ENCODE measurements at regions of chr6 and their contacts with region 1.

Region 1: GRCh38 chr6:33620856-33621710 is at the start of gene ITPR3:
- DNase-seq: peak; percentile 61 to 93 (median 74)
- ATAC-seq: peak; percentile 88
- H3K4me3 ChIP-seq: peak within 1 kb of the TSS; percentile 99
- H3K4me3 Mint-ChIP-seq: peak within 1 kb of the TSS; percentile 95
- H3K27ac ChIP-seq: peak within 1 kb of the TSS; percentile 76 to 82
- H3K27ac Mint-ChIP-seq: peak within 1 kb of the TSS; percentile 93
- H3K4me1 ChIP-seq: peaks cover 60% of the 10 kb centered on the region
- H3K4me1 Mint-ChIP-seq: peaks cover 42% of the 10 kb centered on the region
- H3K27me3 ChIP-seq: no peaks in the 10 kb centered on the region
- H3K27me3 Mint-ChIP-seq: no peaks in the 10 kb centered on the region
- CTCF ChIP-seq: no peak
- total RNA-seq, gene ITPR3: 44.5 to 45.5 TPM

Region 2: GRCh38 chr6:33592411-33593054 is 28.6 kb before region 1 on chr6:
- CTCF ChIA-PET with region 1: interaction called, 5 read pairs
- POLR2A ChIA-PET with region 1: interaction called, 16 read pairs
- intact Hi-C with region 1: no loop called
- DNase-seq: peak; percentile 34 to 77 (median 58)
- ATAC-seq: peak; percentile 77
- H3K4me3 ChIP-seq: peak overlapping the region; percentile 63
- H3K4me3 Mint-ChIP-seq: peak overlapping the region; percentile 75
- H3K27ac ChIP-seq: peak overlapping the region; percentile 5 to 22
- H3K27ac Mint-ChIP-seq: peak overlapping the region; percentile 73
- H3K4me1 ChIP-seq: peaks cover 33% of the 10 kb centered on the region
- H3K4me1 Mint-ChIP-seq: peaks cover 17% of the 10 kb centered on the region
- H3K27me3 ChIP-seq: no peaks in the 10 kb centered on the region
- H3K27me3 Mint-ChIP-seq: no peaks in the 10 kb centered on the region
- CTCF ChIP-seq: no peak

Region 3: DNA sequence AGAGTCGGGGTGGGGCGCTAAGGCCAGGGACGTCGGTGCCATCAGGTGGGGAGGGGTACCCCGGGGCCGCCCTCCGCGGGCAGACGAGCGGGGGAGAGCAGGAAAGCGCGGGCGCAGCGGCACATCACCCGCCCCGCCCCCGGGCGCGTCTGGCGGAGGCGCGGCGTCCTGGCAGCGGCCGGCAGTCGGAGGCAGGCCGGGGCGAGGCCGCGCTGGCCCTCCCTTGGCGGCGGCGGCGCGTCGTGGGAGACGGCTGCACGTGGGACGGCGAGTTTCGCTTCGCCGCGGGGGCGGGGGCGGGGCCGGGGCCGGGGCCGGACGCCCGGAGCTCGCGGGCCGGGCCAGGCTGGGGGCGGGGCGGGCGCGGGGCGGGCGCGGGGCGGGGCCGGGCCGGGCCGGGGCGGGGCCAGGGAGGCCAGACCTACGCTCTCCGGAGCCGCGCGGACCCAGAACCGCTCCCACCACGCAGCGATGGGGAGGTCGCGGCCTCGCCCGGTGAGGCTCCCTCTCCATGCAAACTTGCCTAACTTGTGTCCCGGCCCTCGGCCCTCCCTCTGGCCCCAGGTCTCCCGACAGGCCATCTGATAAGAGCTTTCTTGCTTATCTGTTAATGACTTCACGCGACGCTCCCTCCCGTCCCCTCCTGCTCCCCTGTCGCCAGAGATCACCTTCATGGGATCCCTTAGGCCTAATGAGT is 12.5 kb after region 1 on chr6:
- CTCF ChIA-PET with region 1: no interaction called
- POLR2A ChIA-PET with region 1: interaction called, 18 read pairs
- intact Hi-C with region 1: loop called in 1 of 2 experiments (anchors 2 kb)
- DNase-seq: peak in 13 of 14 experiments; percentile 17 to 85 (median 49)
- ATAC-seq: peak; percentile 63
- H3K4me3 ChIP-seq: peak overlapping the region; percentile 55
- H3K4me3 Mint-ChIP-seq: peak overlapping the region; percentile 93
- H3K27ac ChIP-seq: no peak overlapping the region
- H3K27ac Mint-ChIP-seq: peak overlapping the region; percentile 68
- H3K4me1 ChIP-seq: peaks cover 56% of the 10 kb centered on the region
- H3K4me1 Mint-ChIP-seq: peaks cover 71% of the 10 kb centered on the region
- H3K27me3 ChIP-seq: no peaks in the 10 kb centered on the region
- H3K27me3 Mint-ChIP-seq: no peaks in the 10 kb centered on the region
- CTCF ChIP-seq: no peak

Region 4: DNA sequence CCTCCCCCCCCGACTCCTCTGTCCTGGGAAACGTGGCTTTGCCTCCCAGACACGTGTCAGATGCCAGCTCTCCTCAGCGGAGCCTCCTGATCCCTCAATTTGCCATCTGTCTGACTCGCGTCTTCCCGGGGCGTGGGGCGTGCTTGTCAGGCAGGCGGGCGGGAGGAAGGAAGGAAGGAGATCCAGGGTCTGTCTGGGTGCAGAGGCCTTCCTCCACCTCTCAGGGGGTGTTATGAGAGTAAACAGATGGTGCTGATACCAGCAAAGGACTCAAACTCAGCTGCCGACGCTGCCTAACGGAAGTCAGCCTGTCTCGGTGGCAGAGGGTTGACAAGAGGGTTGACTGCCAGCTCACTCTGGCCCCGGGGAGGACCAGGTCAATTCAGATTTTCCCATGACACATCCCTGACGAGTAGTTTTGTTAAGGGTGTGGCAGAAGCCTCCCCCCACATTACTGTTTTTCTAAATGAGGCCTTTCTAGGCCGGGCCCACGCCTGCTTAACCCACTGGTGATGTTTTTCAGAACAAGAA is 73.4 kb after region 1 on chr6:
- CTCF ChIA-PET with region 1: no interaction called
- POLR2A ChIA-PET with region 1: interaction called, 20 read pairs
- intact Hi-C with region 1: loop called in 1 of 2 experiments (anchors 5 kb)
- DNase-seq: peak; percentile 40 to 82 (median 66)
- ATAC-seq: peak; percentile 68
- H3K4me3 ChIP-seq: no peak overlapping the region
- H3K4me3 Mint-ChIP-seq: peak overlapping the region; percentile 81
- H3K27ac ChIP-seq: peak overlapping the region; percentile 77 to 88
- H3K27ac Mint-ChIP-seq: peak overlapping the region; percentile 97
- H3K4me1 ChIP-seq: peaks cover 79% of the 10 kb centered on the region
- H3K4me1 Mint-ChIP-seq: peaks cover 81% of the 10 kb centered on the region
- H3K27me3 ChIP-seq: no peaks in the 10 kb centered on the region
- H3K27me3 Mint-ChIP-seq: no peaks in the 10 kb centered on the region
- CTCF ChIP-seq: no peak

Region 5: DNA sequence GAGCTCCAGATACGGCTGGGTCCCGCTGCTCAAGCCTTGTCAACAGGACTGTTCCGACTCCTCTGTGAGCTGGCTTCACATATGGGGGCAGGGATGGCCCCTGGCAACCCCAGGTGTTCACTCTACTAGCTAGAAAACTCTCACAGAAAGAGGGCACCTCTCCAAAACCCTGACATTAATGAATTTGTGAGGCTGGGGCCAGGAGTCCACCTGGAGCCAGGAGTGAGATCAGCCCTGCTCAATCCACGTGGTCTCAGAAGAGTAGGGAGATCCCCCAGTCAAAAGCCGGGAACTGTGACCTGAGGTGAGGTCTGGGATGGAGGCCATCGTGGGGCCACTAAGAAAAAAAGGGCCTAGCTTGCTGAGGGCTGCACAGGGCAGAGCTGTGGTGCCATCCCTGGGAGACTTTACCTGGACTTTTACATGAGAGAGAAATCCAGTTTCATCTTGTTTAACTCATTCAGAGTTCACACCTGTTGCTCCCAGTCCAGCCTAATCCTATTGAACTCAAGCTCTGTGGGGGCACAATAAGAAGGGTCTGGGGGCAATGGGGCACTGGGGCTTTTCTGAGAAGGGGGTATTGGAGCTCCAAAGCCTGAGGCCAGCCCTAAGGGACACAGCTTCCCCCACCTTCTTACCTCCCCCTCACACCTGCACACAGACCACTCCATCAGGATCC is 327.0 kb after region 1 on chr6:
- CTCF ChIA-PET with region 1: no interaction called
- POLR2A ChIA-PET with region 1: no interaction called
- intact Hi-C with region 1: no loop called
- DNase-seq: no peak
- ATAC-seq: no peak
- H3K4me3 ChIP-seq: no peak overlapping the region
- H3K4me3 Mint-ChIP-seq: no peak overlapping the region
- H3K27ac ChIP-seq: no peak overlapping the region
- H3K27ac Mint-ChIP-seq: no peak overlapping the region
- H3K4me1 ChIP-seq: no peaks in the 10 kb centered on the region
- H3K4me1 Mint-ChIP-seq: no peaks in the 10 kb centered on the region
- H3K27me3 ChIP-seq: no peaks in the 10 kb centered on the region
- H3K27me3 Mint-ChIP-seq: no peaks in the 10 kb centered on the region
- CTCF ChIP-seq: no peak

Measured in CD4-positive, alpha-beta T cell (primary cell).